HEK293T (cell line): ENCODE measurements at regions of chr6 and their contacts with region 1.

Region 1: GRCh38 chr6:27893059-27893835 is 18.9 kb downstream of the OR2B2 start:
- DNase-seq: peak; percentile 86

Region 2: DNA sequence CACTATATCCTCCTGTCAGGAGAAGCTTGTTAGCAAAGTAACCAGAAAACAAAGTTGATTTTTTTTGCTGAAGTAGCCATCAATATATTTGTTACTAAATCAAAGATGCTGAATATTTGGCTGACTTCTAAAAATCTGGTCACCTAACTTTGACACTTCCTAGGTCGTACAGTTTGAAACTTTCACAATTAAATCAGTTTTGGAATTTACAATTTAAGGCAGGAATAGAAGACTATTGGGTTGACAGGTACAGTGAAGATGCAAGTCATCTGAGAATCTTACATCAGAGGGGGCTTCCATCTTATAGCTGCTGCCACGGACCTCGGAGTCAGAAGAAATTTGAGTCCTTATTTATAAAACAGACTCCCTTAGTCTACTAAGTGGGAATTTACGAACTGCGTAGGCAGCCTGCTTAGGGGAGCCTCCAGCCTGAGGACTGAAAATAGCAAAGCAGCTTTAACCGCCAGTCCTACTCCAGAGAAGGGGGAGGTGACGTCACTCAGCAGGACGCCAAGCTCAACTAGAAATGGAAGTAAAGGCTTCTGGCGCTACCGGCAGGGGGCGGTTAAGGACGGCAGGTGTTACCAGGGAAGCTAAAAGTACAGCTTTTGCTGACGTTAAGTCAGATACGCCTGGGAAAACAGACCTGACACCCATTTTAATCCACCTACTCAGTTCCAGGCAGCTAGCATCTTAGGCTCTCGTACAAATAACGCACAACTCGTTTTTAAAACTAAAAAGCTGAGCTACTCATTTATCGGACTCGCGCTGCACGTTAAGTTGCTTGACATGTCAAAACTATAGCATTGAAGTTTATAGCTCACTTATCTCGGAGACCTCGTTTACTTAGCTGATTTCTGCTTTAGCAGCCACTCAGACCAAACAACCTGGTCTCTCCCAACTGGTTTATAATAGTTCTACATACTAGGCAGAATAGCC is 1867.1 kb before region 1 on chr6:
- CTCF ChIA-PET with region 1: interaction called, 3 read pairs
- POLR2A ChIA-PET with region 1: interaction called, 39 read pairs
- DNase-seq: peak; percentile 55

Region 3: DNA sequence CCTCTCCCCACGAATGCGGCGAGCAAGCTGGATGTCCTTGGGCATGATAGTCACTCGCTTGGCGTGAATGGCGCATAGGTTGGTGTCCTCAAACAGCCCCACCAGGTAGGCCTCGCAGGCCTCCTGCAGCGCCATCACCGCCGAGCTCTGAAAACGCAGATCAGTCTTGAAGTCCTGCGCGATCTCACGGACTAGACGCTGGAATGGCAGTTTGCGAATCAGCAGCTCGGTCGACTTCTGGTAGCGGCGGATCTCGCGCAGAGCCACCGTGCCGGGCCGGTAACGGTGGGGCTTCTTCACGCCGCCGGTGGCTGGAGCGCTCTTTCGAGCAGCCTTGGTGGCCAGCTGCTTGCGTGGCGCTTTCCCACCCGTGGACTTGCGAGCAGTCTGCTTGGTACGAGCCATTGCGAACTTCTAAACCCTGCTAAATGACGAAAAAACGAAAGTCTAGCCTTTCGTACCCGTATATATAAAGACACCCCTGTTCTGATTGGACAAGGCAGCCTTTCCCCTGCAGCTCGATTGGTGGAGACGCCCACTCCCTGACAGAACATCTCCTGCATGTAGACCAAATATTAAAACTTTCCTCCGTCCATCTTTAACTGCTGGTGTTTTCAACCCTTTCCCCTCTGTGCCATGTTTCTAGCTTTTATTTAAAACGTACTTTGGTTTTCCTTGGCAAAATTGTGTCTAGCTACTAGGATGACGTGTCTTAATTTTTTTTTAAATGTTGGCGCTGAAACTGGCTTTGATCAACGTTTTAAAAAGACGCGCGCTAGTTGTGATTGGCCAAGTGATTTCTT is 1696.2 kb before region 1 on chr6:
- CTCF ChIA-PET with region 1: no interaction called
- POLR2A ChIA-PET with region 1: interaction called, 15 read pairs
- DNase-seq: no peak

Region 4: GRCh38 chr6:27772261-27773001 is 120.8 kb before region 1 on chr6:
- CTCF ChIA-PET with region 1: interaction called, 6 read pairs
- POLR2A ChIA-PET with region 1: interaction called, 31 read pairs
- DNase-seq: peak; percentile 86

Region 5: GRCh38 chr6:27825025-27825793 is 68.0 kb before region 1 on chr6:
- CTCF ChIA-PET with region 1: no interaction called
- POLR2A ChIA-PET with region 1: interaction called, 196 read pairs
- DNase-seq: no peak

Region 6: DNA sequence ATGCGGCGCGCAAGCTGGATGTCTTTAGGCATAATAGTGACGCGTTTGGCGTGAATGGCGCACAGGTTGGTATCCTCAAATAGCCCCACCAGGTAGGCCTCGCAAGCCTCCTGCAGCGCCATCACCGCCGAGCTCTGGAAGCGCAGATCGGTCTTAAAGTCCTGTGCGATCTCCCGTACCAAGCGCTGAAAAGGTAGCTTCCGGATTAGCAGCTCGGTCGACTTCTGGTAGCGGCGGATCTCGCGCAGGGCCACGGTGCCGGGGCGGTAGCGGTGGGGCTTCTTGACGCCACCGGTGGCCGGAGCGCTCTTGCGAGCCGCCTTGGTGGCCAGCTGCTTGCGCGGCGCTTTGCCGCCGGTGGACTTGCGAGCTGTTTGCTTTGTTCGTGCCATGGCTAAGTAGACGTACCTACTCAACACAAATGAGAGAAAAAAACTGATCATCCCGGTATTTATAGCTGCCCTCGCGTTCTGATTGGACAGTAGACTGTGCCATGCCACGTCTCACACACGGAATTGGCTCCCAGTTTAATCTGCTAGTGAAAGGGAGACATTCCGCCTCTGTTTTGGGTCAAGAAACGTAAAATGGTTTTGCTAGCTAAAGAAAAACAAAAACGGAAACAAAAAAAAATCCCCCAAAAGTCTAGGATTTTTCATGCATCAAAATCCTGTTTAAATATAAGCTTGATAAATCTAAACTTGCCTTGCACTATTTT is 21.2 kb before region 1 on chr6:
- CTCF ChIA-PET with region 1: interaction called, 4 read pairs
- POLR2A ChIA-PET with region 1: interaction called, 321 read pairs
- DNase-seq: no peak